Dorsolateral prefrontal cortex (tissue), 120 donors: ENCODE measurements at regions of chr11 and their contacts with region 1.

Region 1: DNA sequence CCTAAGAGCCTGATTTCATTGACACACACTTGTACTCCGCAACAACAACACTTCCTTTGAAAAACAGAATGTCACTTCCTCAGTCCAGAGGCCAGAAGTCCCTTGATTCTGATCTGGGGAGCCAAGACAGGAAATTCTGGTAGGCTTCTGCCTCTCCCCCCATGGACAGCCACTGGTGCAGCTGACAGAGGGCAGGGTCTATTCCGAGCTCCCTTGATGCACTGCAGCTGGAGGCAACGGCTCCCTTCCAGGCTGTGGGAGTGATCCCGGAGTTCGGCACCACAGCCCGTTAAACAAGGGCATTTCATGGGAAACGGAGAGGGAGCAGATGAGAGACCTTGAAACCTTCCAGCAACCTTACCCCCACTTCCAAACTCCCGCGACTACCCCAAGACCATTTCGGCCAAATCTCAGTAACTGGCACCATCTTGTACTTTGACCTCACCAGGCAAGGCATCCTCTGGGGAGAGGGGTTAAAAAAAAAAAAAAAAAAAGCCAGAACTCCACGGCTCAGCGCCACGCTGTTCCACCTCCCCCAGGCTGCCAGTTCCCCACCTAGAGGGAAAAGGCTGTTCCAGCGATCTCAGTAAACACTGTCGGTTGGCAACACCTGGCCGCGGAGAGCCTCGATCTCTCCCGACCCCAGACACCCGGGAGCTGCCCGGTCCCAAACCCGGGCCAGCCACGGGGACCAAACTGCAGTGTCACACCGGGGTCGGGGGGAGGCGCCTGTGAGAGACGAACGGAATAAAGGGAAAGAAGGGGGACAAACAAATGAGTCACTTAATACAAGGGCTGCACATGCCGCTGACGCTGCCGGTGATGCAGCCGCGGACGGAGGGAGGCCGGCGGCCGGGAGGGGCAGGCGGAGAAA is 1.1 kb downstream of the GAB2 start:
- DNase-seq: peak; percentile 66 to 91 (median 86)
- H3K4me3 ChIP-seq: peak overlapping the region; percentile 65 to 95 (median 86)
- H3K27ac ChIP-seq: peak overlapping the region; percentile 89 to 100 (median 98)
- H3K27me3 ChIP-seq: no peaks in the 10 kb centered on the region
- CTCF ChIP-seq: peak; percentile 16 to 79 (median 60)

Region 2: DNA sequence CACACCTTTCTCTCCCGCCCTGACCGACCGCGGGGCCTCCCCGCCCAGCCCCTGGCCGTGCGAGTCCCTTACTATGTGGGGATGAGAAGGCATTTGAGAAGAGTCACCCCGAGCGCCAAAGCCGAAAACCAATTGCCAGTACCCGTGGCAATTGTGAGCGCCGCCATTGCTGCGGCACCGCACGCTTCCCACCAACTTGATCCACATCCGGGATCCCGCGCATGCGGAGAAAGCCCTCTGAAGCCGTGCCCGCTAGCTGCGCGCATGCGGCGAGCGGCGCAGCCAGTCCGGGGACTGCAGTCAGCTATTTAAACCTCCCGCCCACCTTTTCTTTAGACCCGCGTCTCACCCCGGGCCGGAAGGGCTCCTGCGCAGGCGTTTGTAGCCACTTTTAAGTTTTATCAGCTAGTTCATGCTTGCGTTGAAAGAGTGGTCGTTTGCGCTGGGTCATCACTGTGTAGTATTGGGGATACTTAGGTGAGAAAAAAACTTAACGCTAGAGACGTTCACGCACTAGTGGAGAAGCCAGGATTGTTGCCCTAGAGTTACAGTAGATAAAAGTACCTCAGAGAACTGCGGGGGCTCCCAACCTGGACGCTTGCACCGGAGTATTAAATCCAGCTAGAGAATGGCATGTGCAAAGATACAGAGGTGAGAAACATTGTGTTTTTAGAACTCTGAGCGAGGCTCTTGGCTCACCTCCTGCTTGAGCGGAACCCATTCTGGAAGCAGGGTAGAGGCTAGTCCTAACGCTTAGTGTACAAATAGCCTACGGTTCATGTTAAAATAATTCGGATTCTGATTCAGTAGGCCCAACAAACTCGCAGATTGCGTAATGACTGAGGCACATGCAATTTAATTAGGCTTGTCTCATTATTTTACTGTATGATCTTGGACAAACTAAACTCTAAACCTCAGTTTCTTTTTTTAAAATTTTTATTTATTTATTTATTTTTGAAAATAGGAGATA is 276.8 kb before region 1 on chr11 and contains the start of gene ALG8:
- intact Hi-C with region 1: loop called in 1 of 2 experiments (anchors 5 kb)
- DNase-seq: peak; percentile 87 to 96 (median 91)
- H3K4me3 ChIP-seq: peak within 1 kb of the TSS; percentile 50 to 99 (median 86)
- H3K27ac ChIP-seq: peak within 1 kb of the TSS in 51 of 59 donors; percentile 12 to 91 (median 67)
- H3K27me3 ChIP-seq: no peaks in the 10 kb centered on the region
- CTCF ChIP-seq: peak in 38 of 56 donors; percentile 9 to 66 (median 30)
- total RNA-seq, gene ALG8: 22.3 to 55.7 (median 33.7) TPM

Region 3: GRCh38 chr11:78228467-78228866 is 188.1 kb before region 1 on chr11:
- intact Hi-C with region 1: loop called (anchors 2 kb)
- DNase-seq: peak in 1 of 10 donors; percentile 32
- H3K4me3 ChIP-seq: no peak overlapping the region
- H3K27ac ChIP-seq: peak overlapping the region in 55 of 59 donors; percentile 11 to 80 (median 56)
- H3K27me3 ChIP-seq: no peaks in the 10 kb centered on the region
- CTCF ChIP-seq: peak in 55 of 56 donors; percentile 49 to 86 (median 67)

Region 4: DNA sequence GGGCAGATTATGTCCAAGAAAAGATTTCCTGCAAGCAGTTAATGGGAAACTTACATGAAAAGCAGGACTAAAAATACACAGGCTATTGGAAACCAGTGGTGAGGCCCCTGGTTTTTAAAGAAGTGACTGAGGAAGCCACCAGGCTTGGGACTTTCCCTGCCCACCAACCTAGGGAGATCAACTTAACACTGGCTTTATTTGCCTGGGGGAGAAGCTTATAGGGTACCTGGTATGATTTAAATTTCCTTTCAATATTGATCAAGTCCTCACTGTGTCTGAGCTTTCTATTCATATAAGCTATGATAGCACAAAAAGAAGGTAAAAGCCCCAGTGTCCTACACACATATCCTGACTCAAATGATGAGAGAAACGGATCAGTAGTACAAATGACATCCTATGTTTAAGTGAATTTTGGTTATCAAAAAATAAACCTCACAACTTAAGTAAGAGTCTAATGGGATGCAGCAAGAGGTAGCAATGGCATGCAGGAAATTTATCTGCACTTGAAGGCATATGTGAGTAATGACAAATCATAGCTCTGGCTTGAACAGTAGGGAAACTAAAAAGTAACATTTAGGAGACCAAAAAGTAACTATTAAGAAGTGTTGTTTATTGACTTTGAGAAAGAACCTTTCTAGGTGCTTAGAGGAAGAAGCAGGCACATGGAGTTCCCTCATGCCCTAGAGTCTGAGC is 84.2 kb before region 1 on chr11:
- intact Hi-C with region 1: loop called (anchors 5 kb)
- DNase-seq: no peak
- H3K4me3 ChIP-seq: peak overlapping the region in 7 of 59 donors; percentile 1 to 31 (median 13)
- H3K27ac ChIP-seq: peak overlapping the region in 58 of 59 donors; percentile 43 to 99 (median 89)
- H3K27me3 ChIP-seq: no peaks in the 10 kb centered on the region
- CTCF ChIP-seq: peak in 3 of 56 donors; percentile 1 to 8 (median 1)

Region 5: GRCh38 chr11:78370406-78371172 is 46.0 kb before region 1 on chr11:
- intact Hi-C with region 1: loop called (anchors 5 kb)
- DNase-seq: peak in 1 of 10 donors; percentile 33
- H3K4me3 ChIP-seq: peak overlapping the region in 3 of 59 donors; percentile 9 to 27 (median 12)
- H3K27ac ChIP-seq: peak overlapping the region in 58 of 59 donors; percentile 20 to 90 (median 73)
- H3K27me3 ChIP-seq: no peaks in the 10 kb centered on the region
- CTCF ChIP-seq: no peak

Region 6: GRCh38 chr11:78564490-78565467 is 148.2 kb after region 1 on chr11:
- intact Hi-C with region 1: loop called in 1 of 2 experiments (anchors 10 kb)
- DNase-seq: peak in 1 of 10 donors; percentile 11
- H3K4me3 ChIP-seq: no peak overlapping the region
- H3K27ac ChIP-seq: no peak overlapping the region
- H3K27me3 ChIP-seq: no peaks in the 10 kb centered on the region
- CTCF ChIP-seq: peak; percentile 64 to 87 (median 76)

Region 7: DNA sequence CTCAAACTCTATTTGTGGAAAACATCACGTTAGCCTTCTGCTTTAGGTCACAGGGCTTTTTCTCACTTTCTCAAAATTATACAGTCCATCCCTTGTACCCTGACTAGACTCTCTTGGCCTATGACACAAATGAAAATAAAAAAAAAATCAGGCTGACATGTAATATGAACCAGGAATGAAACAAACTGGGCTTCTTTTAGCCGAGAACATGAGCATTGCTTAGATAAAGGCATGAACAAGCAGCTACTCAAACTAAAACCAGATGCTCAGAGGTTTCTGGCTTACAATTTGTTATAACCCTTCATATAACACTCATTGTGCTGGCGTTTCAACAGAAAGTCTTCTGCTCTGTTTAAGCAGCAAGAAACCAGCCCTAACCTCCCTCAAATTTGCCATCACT is 423.7 kb after region 1 on chr11:
- intact Hi-C with region 1: no loop called
- DNase-seq: no peak
- H3K4me3 ChIP-seq: no peak overlapping the region
- H3K27ac ChIP-seq: peak overlapping the region in 3 of 59 donors; percentile 2 to 35 (median 24)
- H3K27me3 ChIP-seq: no peaks in the 10 kb centered on the region
- CTCF ChIP-seq: no peak

Region 8: GRCh38 chr11:80129389-80129788 is 1712.8 kb after region 1 on chr11:
- intact Hi-C with region 1: no loop called
- DNase-seq: no peak
- H3K4me3 ChIP-seq: no peak overlapping the region
- H3K27ac ChIP-seq: no peak overlapping the region
- H3K27me3 ChIP-seq: no peaks in the 10 kb centered on the region
- CTCF ChIP-seq: no peak